HepG2 (cell line): ENCODE measurements at regions of chr2 and their contacts with region 1.

Region 1: DNA sequence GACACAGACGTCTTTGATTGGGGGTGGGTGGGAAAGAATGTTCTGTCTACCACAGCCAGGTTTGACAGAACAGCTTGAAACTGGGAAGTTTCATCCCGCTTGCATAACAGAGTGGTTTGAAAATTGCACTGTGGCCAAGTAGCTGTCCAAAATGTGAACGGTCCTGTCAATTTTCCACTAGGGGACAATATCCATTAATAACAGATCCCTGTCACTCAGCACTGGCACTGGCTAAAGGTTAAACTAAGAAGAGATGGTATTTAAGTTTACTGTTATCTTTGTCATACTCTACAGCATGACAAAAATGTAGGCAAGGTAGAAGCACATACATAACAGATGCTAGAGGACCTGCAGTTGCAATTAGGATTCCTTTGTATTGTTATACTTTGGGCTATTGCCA is 55.6 kb upstream of the ACMSD start:
- DNase-seq: peak; percentile 73
- ATAC-seq: peak; percentile 95
- H3K4me3 ChIP-seq: no peak overlapping the region
- H3K27ac ChIP-seq: no peak overlapping the region
- H3K4me1 ChIP-seq: no peaks in the 10 kb centered on the region
- H3K27me3 ChIP-seq: no peaks in the 10 kb centered on the region
- CTCF ChIP-seq: peak; percentile 83
- EP300 ChIP-seq: no peak
- POLR2A ChIP-seq: no peak
- RAD21 ChIP-seq: peak; percentile 58

Region 2: GRCh38 chr2:134466141-134466540 is 316.7 kb before region 1 on chr2:
- CTCF ChIA-PET with region 1: interaction called, 7 read pairs
- POLR2A ChIA-PET with region 1: no interaction called
- in situ Hi-C with region 1: loop called (anchors 5 kb)
- intact Hi-C with region 1: loop called (anchors 1 kb)
- DNase-seq: peak; percentile 66
- ATAC-seq: peak; percentile 63
- H3K4me3 ChIP-seq: no peak overlapping the region
- H3K27ac ChIP-seq: no peak overlapping the region
- H3K4me1 ChIP-seq: no peaks in the 10 kb centered on the region
- H3K27me3 ChIP-seq: peaks cover 5 to 22% of the 10 kb centered on the region in 2 experiments; a peak in 4 of 5 replicates
- CTCF ChIP-seq: peak; percentile 77
- EP300 ChIP-seq: no peak
- POLR2A ChIP-seq: no peak
- RAD21 ChIP-seq: 0 out of 2 replicates have a peak, but pooled peaks have one; percentile 22

Region 3: GRCh38 chr2:134897932-134898331 is 115.1 kb after region 1 on chr2:
- CTCF ChIA-PET with region 1: interaction called, 28 read pairs
- POLR2A ChIA-PET with region 1: no interaction called
- in situ Hi-C with region 1: loop called (anchors 5 kb)
- intact Hi-C with region 1: loop called (anchors 1 kb)
- DNase-seq: no peak
- ATAC-seq: no peak
- H3K4me3 ChIP-seq: no peak overlapping the region
- H3K27ac ChIP-seq: no peak overlapping the region
- H3K4me1 ChIP-seq: peaks cover 9% of the 10 kb centered on the region
- H3K27me3 ChIP-seq: no peaks in the 10 kb centered on the region
- CTCF ChIP-seq: no peak
- EP300 ChIP-seq: no peak
- POLR2A ChIP-seq: no peak
- RAD21 ChIP-seq: no peak